Activated B cell treated with CpG ODN at 0.5 μM for 24 hours (primary cell): ENCODE measurements at regions of chr6 and their contacts with region 1.

Region 1: DNA sequence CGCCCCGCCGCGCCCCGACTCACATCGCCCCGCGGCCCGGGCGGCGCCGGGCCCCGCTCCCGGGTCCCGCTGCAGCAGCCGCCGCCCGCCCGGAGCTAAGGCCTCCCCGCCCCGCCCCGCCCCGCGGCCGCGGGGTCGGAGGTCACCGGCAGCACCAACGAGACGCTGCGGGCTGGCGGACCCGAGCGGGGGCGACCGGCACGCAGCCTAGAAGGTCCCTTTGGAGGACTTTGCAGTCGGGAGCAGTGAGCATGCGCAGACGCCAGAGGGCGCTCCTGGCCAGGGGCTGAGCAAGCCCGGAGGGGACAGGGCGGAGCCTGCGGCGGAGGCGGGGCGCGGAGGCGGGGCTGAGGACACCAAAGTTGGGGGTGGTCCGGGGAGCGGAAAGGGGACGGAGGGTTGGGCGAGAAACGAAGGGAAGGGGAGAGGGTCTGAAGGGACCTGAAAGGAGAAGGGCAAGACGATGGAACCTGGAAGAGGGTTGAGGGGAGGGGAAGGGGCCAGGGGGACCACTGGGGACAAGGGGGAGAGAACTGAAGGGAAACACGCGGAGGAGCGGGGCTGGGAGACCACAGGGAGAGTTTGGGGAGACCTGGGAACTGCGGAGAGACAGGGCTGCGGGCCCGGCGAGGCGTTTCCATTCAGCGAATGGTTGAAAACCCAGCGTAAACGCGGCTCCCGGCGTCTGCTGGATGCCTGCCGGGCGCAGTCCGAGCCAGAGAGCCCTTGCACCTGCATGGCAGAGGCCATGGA is at the start of gene FRS3:
- DNase-seq: peak; percentile 100
- ATAC-seq: peak; percentile 95
- H3K4me3 Mint-ChIP-seq: peak within 1 kb of the TSS; percentile 93
- H3K27ac Mint-ChIP-seq: peak within 1 kb of the TSS; percentile 63
- H3K4me1 Mint-ChIP-seq: peaks cover 25% of the 10 kb centered on the region
- H3K27me3 Mint-ChIP-seq: no peaks in the 10 kb centered on the region
- CTCF ChIP-seq: no peak
- total RNA-seq, gene FRS3: 6.5 and 6.7 TPM in 2 replicates

Region 2: DNA sequence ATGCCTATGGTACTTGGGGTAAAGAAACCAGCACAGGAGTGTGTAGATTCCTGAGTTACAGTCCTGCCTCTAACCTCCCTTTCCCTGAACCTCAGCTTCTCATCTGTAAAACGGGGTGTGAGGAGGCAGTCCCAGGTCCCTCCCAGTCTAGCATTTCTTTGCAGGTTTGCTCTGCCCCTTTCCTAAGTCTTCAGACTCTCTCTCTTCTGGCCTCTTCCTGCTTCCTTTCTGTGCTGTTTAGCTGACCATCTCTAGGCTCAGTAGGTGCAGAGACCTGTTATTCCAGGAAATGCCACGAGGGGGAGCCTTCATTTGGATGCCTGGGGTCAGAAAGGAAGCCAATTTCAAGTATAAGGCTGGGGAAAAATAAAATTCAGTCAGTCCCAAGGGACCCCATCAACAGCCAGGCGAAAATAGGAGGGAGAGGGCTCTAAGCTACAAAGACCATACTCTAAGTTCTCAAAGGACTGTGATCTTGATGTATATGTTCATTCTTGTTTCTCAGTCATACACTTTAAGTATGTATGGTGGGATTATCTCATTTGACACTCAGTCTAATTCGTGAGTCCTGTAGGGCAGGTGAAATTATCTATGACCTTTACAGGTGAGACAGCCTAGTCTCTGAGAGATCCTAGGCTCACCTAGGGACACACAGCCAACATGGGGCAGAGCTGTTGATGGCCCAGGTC is 355.5 kb before region 1 on chr6:
- CTCF ChIA-PET with region 1: no interaction called
- POLR2A ChIA-PET with region 1: no interaction called
- intact Hi-C with region 1: loop called (anchors 2 kb)
- DNase-seq: peak; percentile 62
- ATAC-seq: peak; percentile 45
- H3K4me3 Mint-ChIP-seq: no peak overlapping the region
- H3K27ac Mint-ChIP-seq: no peak overlapping the region
- H3K4me1 Mint-ChIP-seq: peaks cover 10% of the 10 kb centered on the region
- H3K27me3 Mint-ChIP-seq: peaks cover 11% of the 10 kb centered on the region
- CTCF ChIP-seq: peak; percentile 60

Region 3: GRCh38 chr6:41705996-41706835 is 73.8 kb before region 1 on chr6:
- CTCF ChIA-PET with region 1: interaction called, 6 read pairs
- POLR2A ChIA-PET with region 1: interaction called, 3 read pairs
- intact Hi-C with region 1: loop called (anchors 1 kb)
- DNase-seq: peak; percentile 83
- ATAC-seq: peak; percentile 81
- H3K4me3 Mint-ChIP-seq: peak overlapping the region; percentile 89
- H3K27ac Mint-ChIP-seq: peak overlapping the region; percentile 97
- H3K4me1 Mint-ChIP-seq: peaks cover 99% of the 10 kb centered on the region
- H3K27me3 Mint-ChIP-seq: no peaks in the 10 kb centered on the region
- CTCF ChIP-seq: peak; percentile 54

Region 4: GRCh38 chr6:42104095-42104806 is 324.3 kb after region 1 on chr6:
- CTCF ChIA-PET with region 1: interaction called, 5 read pairs
- POLR2A ChIA-PET with region 1: no interaction called
- intact Hi-C with region 1: loop called (anchors 1 kb)
- DNase-seq: peak; percentile 56
- ATAC-seq: peak; percentile 84
- H3K4me3 Mint-ChIP-seq: peak overlapping the region; percentile 72
- H3K27ac Mint-ChIP-seq: no peak overlapping the region
- H3K4me1 Mint-ChIP-seq: peaks cover 5% of the 10 kb centered on the region
- H3K27me3 Mint-ChIP-seq: peaks cover 8% of the 10 kb centered on the region
- CTCF ChIP-seq: no peak

Region 5: DNA sequence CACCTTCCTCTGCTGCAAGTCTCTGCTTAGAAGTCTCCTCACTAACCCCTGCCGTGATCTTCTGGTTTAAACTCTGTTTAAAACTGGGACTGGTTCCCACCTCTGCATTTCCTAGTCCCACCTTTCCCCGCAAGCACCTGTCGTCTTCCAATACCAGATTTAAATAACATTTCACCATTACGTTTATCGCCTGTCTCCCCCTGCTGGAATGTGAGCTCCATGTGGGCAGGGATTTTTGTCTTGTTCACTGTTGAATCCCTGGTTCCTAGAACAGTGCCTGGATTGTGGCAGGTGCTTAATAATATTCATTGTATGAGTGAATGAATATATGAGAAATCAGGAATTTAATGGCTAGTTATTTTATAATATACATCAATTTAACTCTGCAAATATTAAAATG is 395.9 kb after region 1 on chr6:
- CTCF ChIA-PET with region 1: no interaction called
- POLR2A ChIA-PET with region 1: interaction called, 10 read pairs
- intact Hi-C with region 1: no loop called
- DNase-seq: no peak
- ATAC-seq: no peak
- H3K4me3 Mint-ChIP-seq: no peak overlapping the region
- H3K27ac Mint-ChIP-seq: no peak overlapping the region
- H3K4me1 Mint-ChIP-seq: peaks cover 5% of the 10 kb centered on the region
- H3K27me3 Mint-ChIP-seq: no peaks in the 10 kb centered on the region
- CTCF ChIP-seq: no peak